A549 (cell line): ENCODE measurements at regions of chr20 and their contacts with region 1.

Region 1: DNA sequence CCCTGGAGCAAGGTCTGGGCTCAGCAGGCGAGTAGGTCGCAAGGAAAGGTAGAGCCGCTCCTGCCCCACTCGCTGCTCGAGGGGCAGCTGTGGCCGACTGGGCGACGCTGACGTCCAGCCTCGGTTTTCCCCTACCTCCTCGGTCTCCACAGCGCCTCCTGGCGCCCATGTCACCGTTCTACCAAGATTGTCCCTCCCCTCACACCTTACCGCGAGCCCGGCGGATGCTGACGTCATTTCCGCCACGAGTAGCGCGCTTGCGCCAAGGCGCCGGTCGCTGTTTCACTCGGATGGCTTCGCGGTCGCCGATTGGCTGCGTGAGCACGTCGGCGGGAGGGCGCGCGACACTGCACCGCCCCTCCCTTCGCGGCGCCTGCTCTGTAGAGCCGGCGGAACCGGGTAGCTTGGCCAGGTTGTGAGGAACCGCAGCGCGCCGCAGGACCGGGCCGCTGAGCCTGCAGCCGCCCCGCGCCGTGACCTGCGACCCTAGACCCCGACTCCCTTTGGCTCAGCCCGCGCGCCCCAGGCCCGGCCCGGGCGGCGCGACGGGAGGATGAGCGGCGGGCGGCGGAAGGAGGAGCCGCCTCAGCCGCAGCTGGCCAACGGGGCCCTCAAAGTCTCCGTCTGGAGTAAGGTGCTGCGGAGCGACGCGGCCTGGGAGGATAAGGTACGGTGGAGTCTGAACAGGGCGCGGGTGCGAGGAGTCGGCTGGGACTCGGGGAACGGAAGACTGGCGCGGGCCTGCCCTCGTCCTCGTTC is at the start of gene RAB5IF:
- DNase-seq: peak; percentile 85 to 99
- ATAC-seq: peak; percentile 96 to 97
- H3K4me3 ChIP-seq: peak within 1 kb of the TSS; percentile 98
- H3K27ac ChIP-seq: peak within 1 kb of the TSS; percentile 95 to 96
- H3K4me1 ChIP-seq: peaks cover 22% of the 10 kb centered on the region
- CTCF ChIP-seq: peak; percentile 90
- EP300 ChIP-seq: no peak
- POLR2A ChIP-seq: peak; percentile 81
- RAD21 ChIP-seq: peak; percentile 66 to 73
- polyA plus RNA-seq, gene RAB5IF: 344 and 345 TPM in 2 replicates

Region 2: DNA sequence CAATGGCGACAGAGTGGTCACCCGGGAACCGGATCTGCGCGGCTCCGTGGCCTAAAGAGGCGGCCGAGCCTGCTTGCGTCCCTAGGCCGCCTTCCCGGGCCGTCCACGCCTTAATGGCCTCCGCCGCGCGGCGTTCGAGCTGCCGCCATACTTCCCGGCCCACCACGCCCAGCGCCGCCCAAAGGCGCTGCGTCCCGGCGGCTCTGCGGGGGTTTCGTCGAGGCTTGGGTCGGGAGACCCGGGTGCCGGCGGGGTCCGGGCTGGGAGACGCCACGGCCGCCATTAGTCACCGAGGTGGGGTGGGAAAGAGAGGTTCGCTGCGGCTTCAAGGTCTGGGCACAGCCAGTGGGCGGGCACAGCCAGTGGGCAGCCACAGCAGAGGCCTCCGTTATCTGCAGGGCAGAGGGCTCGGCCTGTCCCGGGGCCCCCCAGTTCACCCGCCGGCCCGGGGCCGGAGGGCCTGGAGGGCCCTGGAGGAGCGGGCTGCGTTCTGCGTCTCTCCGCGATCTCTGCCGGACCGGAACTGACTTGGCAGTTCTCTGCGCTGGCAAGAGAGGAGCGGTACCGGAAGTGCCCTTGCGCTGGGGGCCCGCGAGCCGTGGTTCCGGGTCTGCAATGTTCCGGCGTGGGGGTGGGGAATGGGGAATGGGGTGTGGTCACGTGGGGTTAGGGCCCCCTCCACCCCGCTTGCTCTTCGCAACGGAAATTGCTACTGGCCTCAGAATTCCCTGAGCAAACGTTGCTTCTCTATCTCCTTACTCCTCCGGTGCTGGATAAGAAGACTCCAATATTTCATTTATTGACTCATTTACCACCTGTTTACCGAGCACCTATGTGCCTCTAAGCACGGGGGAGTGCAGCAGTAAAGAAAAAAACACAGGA is 554.9 kb before region 1 on chr20:
- CTCF ChIA-PET with region 1: no interaction called
- POLR2A ChIA-PET with region 1: no interaction called
- DNase-seq: peak; percentile 91 to 95
- ATAC-seq: peak; percentile 98 to 99
- H3K4me3 ChIP-seq: peak overlapping the region; percentile 98
- H3K27ac ChIP-seq: peak overlapping the region; percentile 98 to 99
- H3K4me1 ChIP-seq: peaks cover 29% of the 10 kb centered on the region
- CTCF ChIP-seq: no peak; the same call in 2 of the 3 replicates
- EP300 ChIP-seq: peak in 1 of 2 experiments; percentile 18; a peak in 1 of 5 replicates
- POLR2A ChIP-seq: peak; percentile 93
- RAD21 ChIP-seq: peak in 1 of 2 experiments; percentile 32; a peak in 1 of 5 replicates

Region 3: DNA sequence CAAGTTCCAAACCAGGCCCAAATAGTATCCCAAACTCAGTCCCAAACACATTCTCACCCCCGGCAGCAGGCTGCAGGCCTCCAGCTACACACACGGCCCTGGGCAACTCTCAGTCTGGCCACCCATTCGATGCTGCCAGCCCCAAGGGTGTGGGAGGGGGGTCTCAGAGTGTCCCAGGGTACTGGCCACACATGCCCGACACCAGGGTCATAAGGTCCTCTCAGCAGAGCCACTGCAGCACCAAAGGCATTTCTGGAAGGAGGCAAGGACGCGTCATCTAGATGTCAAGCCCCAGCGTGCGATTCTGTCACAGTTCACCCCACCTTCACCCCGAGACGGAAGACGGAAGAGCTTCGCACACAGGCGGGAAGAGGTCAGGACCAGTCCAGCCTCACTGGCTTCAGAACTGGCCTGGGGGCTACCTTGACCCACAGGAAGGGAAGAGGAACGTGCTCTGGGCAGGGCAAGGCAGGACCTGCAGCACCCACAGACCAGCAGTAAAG is 54.7 kb before region 1 on chr20:
- CTCF ChIA-PET with region 1: interaction called, 21 read pairs
- POLR2A ChIA-PET with region 1: no interaction called
- DNase-seq: no peak
- ATAC-seq: peak in 1 of 2 experiments; percentile 14; a peak in 1 of 6 replicates
- H3K4me3 ChIP-seq: no peak overlapping the region
- H3K27ac ChIP-seq: no peak overlapping the region
- H3K4me1 ChIP-seq: no peaks in the 10 kb centered on the region
- CTCF ChIP-seq: no peak
- EP300 ChIP-seq: no peak
- POLR2A ChIP-seq: no peak
- RAD21 ChIP-seq: no peak

Region 4: DNA sequence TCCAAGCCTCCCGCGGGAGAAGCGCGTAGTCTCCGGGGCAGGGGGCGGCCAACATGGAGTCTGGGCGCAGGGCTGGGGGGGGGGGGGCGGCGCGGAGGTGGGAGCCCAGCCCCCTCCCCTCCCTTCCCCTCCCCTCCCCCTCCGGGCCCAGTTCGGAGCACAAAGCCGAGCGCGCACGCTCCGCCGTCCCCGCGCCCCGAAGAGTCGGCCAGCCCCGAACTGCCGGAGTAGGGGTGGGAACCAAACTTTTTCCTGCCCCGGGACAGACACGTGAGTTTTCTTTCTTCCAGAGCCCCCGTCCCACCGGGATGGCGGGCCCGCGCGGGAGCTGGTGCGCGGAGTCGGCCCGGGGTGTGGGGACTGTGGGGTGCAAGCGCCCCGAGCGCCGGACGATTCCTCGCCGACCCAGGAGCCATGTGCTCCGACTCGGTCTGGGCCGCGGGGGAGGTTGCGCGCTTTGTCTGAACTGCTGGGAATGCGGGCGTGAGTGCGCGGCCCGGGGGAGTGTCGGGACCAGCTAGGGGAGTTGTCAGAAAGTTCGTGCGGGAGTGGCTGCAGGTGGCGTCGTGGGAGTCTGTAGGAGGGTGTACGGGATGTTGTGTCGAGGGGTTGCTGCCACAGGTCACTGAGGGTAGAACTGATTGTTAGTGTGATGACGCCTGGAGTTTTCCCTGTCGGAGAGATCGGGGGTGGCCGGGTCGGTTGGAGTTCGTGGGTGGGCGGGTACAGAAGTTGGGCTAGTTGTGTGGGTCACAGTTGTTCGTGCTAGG is 31.0 kb before region 1 on chr20:
- CTCF ChIA-PET with region 1: interaction called, 23 read pairs
- POLR2A ChIA-PET with region 1: no interaction called
- DNase-seq: peak; percentile 46
- ATAC-seq: peak; percentile 40 to 70; a peak in 5 of 6 replicates
- H3K4me3 ChIP-seq: peak overlapping the region; percentile 86
- H3K27ac ChIP-seq: peak overlapping the region; percentile 70 to 93
- H3K4me1 ChIP-seq: peaks cover 15% of the 10 kb centered on the region
- CTCF ChIP-seq: no peak
- EP300 ChIP-seq: no peak
- POLR2A ChIP-seq: no peak
- RAD21 ChIP-seq: no peak

Region 5: GRCh38 chr20:36591854-36592641 is 13.5 kb before region 1 on chr20:
- CTCF ChIA-PET with region 1: interaction called, 54 read pairs
- POLR2A ChIA-PET with region 1: interaction called, 3 read pairs
- DNase-seq: no peak
- ATAC-seq: no peak
- H3K4me3 ChIP-seq: no peak overlapping the region
- H3K27ac ChIP-seq: no peak overlapping the region
- H3K4me1 ChIP-seq: no peaks in the 10 kb centered on the region
- CTCF ChIP-seq: peak; percentile 20; the same call in 1 of the 3 replicates
- EP300 ChIP-seq: no peak
- POLR2A ChIP-seq: no peak
- RAD21 ChIP-seq: no peak

Region 6: GRCh38 chr20:36709126-36709525 is 103.5 kb after region 1 on chr20:
- CTCF ChIA-PET with region 1: no interaction called
- POLR2A ChIA-PET with region 1: no interaction called
- DNase-seq: no peak
- ATAC-seq: no peak
- H3K4me3 ChIP-seq: no peak overlapping the region
- H3K27ac ChIP-seq: no peak overlapping the region
- H3K4me1 ChIP-seq: no peaks in the 10 kb centered on the region
- CTCF ChIP-seq: no peak
- EP300 ChIP-seq: no peak
- POLR2A ChIP-seq: no peak
- RAD21 ChIP-seq: no peak

Region 7: DNA sequence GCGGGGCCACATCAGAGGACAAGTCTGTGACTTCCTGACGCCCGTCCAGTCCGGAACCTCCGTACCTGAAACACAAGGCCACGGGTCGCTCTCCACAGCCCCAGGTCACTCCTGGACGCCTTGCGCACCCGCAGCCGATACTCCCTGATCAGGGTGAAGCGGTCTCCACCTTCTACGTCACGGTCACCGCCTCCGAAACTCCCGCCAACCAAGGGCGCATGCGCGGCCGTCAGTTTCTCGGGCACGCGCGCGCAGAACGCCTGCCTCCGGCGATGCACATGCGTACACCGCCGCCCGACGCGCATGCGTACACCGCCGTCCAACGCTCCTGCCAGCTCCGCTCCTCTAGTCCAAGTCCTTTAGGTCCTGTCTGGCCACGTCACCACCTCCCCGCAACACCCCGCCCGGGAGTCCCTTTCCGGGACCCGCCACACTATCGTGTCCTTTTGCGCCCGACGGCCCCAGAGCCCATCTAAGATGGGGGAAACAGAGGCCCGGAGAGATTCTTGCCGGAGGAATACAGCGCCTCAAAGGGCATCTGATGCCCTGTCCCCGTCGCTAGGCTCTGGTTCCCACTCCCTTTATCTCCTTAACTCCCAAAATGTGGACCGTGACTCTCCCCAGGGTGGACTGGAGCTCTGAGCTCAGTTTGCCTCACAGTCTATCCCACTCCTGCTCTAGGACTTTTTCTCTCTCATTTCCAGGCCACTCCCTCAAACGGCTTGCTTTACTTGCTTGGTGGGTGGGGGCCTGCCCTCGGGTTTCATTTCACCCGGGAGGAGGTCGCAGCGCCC is 168.2 kb after region 1 on chr20 and contains the start of gene DSN1:
- CTCF ChIA-PET with region 1: interaction called, 10 read pairs
- POLR2A ChIA-PET with region 1: no interaction called
- DNase-seq: peak; percentile 96 to 98
- ATAC-seq: peak; percentile 89 to 91
- H3K4me3 ChIP-seq: peak within 1 kb of the TSS; percentile 63
- H3K27ac ChIP-seq: peak within 1 kb of the TSS; percentile 93 to 98
- H3K4me1 ChIP-seq: peaks cover 8% of the 10 kb centered on the region
- CTCF ChIP-seq: no peak; the same call in 2 of the 3 replicates
- EP300 ChIP-seq: no peak
- POLR2A ChIP-seq: peak; percentile 61
- RAD21 ChIP-seq: peak; percentile 43 to 49; a peak in 3 of 5 replicates
- polyA plus RNA-seq, gene DSN1: 32.9 and 41.3 TPM in 2 replicates